Right ventricle myocardium inferior (tissue), 1 donor: ENCODE measurements at regions of chr20 and their contacts with region 1.

Region 1: DNA sequence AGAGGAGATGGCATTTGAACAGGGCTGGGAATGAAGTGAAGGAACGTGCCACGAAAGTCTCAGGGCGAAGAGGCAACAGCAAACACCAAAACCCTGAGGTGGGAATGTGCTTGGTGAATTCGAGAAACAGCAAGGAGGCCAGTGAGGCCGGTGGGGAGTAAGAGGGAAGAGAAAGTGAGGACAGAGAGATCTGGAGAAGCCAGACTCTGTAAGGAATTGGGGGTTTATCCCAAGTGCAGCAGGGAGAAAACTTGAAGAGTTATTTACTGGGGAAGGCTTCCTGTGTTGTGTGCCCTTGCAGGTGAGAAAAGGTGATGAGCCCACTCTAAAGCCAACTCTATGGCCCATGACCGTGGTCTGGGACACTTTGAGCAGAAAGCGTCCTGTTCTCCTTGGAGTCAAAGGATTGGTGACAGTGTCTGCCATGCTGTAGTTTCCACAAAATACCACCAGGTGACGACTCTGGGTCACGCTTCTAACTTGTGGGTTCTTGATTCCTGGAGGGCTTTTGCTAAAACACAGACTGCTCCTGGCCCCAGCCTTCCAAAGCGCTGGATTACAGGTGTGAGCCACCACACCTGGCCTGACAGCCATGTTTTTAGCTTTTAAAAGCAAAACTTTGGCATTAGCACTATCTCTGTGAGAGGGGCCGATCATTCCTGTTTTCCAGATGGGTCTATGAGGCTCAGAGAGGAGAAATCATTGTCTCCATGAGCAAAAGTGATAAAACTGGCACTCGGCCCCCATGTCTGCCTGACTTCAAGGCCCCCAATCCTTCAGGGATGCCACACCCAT is 18.0 kb upstream of the CSNK2A1 start:
- DNase-seq: no peak
- ATAC-seq: peak; percentile 82

Region 2: DNA sequence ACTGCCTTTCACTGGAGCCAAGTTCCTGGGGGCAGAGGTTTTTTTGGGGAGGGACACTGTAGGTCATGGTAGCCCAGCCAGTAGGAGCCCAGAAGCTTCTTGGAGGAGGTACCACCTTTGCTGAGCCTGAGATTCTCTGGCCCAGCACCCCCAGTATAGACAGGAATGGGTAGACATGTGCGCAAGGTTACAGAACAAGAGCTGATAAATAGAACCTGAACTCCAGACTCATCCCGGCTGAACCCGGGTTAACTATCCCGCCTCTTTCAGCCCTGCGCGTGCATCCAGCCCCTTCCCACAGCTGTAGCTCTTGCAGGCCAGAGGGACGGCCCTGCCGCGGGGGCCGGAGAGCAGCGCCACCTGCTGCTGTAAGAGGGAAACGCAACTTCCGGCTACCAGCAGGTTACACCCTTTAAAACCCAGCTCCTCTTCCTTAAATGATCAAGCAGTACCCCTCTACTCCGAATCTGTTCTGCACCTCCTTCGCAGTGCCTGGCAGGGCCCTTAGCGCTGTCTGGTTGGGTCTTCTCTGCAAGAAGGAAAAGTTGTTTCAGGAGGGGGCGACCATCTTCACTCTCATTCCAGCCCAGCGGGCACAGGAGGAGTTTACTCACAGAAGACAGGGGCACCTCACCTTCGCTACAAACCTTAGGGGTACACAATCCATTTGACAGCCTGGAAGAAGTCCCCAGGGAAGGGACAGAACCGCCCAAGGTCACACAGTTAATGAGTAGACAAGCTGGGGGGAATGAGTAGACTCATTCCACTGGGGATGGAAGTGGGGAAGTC is 83.9 kb after region 1 on chr20:
- intact Hi-C with region 1: loop called (anchors 1 kb)
- DNase-seq: peak; percentile 86
- ATAC-seq: peak; percentile 66

Region 3: DNA sequence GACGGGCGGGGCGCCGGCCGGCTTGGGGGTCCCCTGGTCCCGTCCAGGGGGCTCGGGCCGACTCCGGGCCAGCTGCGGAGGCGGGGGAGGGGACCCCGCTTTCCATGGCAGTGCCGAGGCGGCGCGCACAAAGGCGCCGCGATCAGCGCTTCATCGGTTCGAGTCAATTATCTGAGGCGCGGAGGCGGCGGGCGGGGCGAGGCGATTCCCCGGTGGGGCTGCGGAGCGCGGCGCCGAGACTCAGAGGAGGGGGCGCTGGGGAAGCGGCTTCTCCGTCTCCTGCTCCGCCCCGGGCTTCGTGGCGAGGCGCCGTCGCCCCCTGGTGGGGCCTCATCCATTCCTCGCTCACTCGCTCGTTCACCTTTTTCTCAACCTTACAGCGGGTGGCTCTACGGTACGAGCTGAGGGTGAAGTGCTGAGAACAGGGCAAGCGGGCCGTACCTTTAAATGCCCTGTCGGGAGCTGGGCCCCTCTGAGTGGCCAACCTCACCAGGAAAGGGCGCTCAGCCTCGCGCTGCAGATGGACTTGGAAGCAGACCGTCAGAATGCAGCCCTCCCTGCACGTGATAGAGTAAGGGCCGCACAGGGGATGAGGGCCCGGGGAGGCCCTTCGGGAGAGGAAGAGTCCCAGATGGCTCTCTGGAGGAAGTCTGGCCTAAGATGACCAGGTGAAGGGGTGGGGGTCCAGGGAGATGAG is 166.8 kb after region 1 on chr20:
- intact Hi-C with region 1: loop called (anchors 1 kb)
- DNase-seq: no peak
- ATAC-seq: peak; percentile 84

Region 4: DNA sequence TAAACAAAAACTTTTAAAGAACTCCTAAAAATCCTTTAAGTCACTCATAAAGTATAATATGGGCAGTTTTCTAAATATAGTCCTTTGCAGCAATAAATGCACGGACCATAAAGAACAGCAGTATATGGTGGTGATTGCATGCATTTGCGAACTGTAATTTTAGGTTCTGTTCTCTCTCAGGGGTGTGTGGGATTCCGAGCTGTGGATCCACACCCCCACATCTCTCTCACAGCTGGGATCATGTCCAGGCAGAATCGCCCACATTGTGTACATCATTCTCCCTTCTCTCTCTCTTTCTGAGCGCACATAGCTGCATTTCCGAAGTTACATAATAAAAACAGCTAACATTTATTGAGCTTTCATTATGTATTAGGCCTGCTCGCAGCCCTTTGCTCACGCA is 178.1 kb after region 1 on chr20:
- intact Hi-C with region 1: loop called (anchors 2 kb)
- DNase-seq: no peak
- ATAC-seq: no peak